HepG2 (cell line): ENCODE measurements at regions of chr4 and their contacts with region 1.

Region 1: DNA sequence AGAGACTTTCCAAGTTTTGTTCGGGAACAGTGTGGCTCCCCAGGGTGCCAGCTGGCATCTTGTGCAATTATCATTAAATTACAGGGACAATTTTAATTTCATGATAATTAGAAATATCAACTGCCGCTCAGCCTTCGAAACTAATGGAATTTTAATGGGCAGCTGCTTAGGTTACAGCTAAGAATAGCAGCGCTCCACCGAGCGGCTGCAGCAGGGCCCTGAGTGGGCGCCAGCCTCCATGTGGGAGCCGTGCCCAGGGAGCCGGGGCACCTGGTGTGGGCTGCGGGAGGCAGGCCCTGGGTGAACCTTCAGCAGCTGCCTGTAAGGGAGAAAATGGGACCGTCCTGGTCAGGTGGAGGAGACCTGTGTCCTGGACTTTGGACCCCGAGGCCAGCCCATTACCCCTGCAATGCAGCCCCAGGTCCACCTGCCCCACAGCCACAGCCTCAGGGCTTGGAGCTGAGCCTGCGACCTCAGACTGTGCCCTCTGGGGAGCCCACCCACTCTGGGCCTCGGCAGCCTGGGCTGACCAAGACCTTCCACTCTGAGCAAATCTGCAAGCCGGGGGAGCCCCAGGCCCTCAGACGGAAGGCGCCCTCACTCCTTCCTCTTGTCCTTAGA is 21.1 kb downstream of the MSANTD1 start:
- DNase-seq: no peak
- ATAC-seq: peak; percentile 56
- H3K4me3 ChIP-seq: peak overlapping the region in 1 of 3 experiments; percentile 12; a peak in 1 of 6 replicates
- H3K27ac ChIP-seq: no peak overlapping the region
- H3K4me1 ChIP-seq: peaks cover 33% of the 10 kb centered on the region
- H3K27me3 ChIP-seq: peaks cover 0 to 41% of the 10 kb centered on the region in 2 experiments
- CTCF ChIP-seq: no peak
- EP300 ChIP-seq: no peak
- POLR2A ChIP-seq: no peak
- RAD21 ChIP-seq: no peak

Region 2: GRCh38 chr4:3201718-3202702 is 68.1 kb before region 1 on chr4:
- CTCF ChIA-PET with region 1: no interaction called
- POLR2A ChIA-PET with region 1: no interaction called
- in situ Hi-C with region 1: no loop called
- intact Hi-C with region 1: loop called (anchors 10 kb)
- DNase-seq: peak; percentile 53
- ATAC-seq: peak; percentile 27
- H3K4me3 ChIP-seq: no peak overlapping the region
- H3K27ac ChIP-seq: peak overlapping the region; percentile 95
- H3K4me1 ChIP-seq: peaks cover 57% of the 10 kb centered on the region
- H3K27me3 ChIP-seq: no peaks in the 10 kb centered on the region
- CTCF ChIP-seq: no peak
- EP300 ChIP-seq: no peak
- POLR2A ChIP-seq: no peak
- RAD21 ChIP-seq: no peak